H1 (cell line): ENCODE measurements at regions of chr7 and their contacts with region 1.

Region 1: GRCh38 chr7:114426382-114427223 is 12.0 kb downstream of the FOXP2 start:
- DNase-seq: no peak
- H3K4me3 ChIP-seq: no peak overlapping the region
- H3K27ac ChIP-seq: no peak overlapping the region
- H3K4me1 ChIP-seq: no peaks in the 10 kb centered on the region
- H3K27me3 ChIP-seq: no peaks in the 10 kb centered on the region
- CTCF ChIP-seq: peak in 2 of 3 experiments; percentile 26 to 45; a peak in 2 of 4 replicates
- EP300 ChIP-seq: no peak
- POLR2A ChIP-seq: no peak
- RAD21 ChIP-seq: peak; percentile 56; a peak in 3 of 4 replicates

Region 2: DNA sequence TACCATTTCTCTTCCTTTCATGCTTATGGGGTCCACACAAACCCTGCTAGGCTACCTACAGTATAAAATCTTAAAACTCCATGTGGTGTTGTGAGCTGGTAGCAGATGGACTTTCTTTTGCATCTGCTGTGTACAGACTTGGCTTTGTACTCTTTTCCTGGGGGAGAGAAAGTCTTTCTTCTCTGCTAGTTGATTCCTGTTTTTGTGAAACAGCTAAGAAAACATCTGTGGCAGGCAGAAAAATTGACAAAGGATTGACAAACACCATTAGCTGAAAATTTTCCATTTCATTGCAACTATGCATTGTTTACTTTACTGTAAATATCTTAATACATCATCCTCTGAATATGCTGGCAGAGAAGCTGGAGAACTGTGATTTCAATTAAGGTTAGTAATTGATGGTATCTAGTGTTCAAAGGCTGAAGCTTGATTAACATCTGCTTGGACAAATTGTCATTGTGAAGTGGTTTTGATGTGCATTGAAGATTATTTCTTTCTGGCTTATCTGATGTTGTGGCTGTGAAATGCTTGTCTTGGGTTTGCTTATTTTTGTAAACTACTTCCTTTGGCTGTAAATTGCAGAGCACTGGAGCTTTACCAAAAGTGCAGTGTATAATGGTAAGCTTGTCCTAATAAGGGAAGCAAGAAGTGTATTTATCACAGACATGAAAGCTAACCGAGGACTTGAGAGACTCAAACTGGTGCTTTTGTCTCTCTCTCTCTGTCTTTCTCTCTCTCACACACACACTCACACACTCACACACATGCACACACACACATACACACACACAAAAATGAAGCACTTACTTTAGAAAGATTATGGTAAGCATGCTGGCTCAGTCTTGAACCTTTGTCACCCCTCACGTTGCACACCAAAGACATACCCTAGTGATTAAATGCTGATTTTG is 12.2 kb before region 1 on chr7 and contains the start of gene FOXP2:
- CTCF ChIA-PET with region 1: interaction called, 10 read pairs
- POLR2A ChIA-PET with region 1: no interaction called
- DNase-seq: no peak
- H3K4me3 ChIP-seq: peak within 1 kb of the TSS in 1 of 4 experiments; percentile 7; a peak in 2 of 8 replicates
- H3K27ac ChIP-seq: no peak within 1 kb of the TSS
- H3K4me1 ChIP-seq: peaks cover 0 to 10% (median 6%) of the 10 kb centered on the region in 4 experiments; a peak in 4 of 7 replicates
- H3K27me3 ChIP-seq: no peaks in the 10 kb centered on the region
- CTCF ChIP-seq: no peak
- EP300 ChIP-seq: no peak
- POLR2A ChIP-seq: no peak
- RAD21 ChIP-seq: no peak
- total RNA-seq, gene FOXP2: 0.10 and 0.43 TPM in 2 replicates

Region 3: DNA sequence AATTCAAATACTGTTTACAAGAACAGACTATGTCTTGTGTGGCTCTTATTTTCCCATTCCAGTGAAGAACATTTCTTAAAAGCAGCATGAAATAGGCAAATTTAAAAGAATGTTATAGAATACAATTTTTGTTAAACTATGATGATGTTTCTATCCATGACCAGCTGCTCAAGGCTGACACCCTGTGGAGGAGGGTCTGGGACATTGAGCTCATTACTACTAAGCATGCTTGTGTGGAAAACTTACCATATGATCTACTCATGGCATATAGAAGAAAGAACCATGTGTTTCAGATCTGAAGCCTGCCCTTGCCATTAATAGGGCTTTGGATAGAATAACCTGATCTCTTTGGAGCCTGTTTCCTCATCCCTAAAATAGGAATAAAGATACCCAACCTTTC is 113.0 kb after region 1 on chr7:
- CTCF ChIA-PET with region 1: interaction called, 10 read pairs
- POLR2A ChIA-PET with region 1: no interaction called
- DNase-seq: no peak
- H3K4me3 ChIP-seq: no peak overlapping the region
- H3K27ac ChIP-seq: no peak overlapping the region
- H3K4me1 ChIP-seq: no peaks in the 10 kb centered on the region
- H3K27me3 ChIP-seq: no peaks in the 10 kb centered on the region
- CTCF ChIP-seq: peak in 1 of 3 experiments; percentile 27; a peak in 1 of 4 replicates
- EP300 ChIP-seq: no peak
- POLR2A ChIP-seq: no peak
- RAD21 ChIP-seq: peak; percentile 32 to 48; a peak in 3 of 4 replicates